Endothelial cell of umbilical vein (primary cell): ENCODE measurements at regions of chr7 and their contacts with region 1.

Region 1: DNA sequence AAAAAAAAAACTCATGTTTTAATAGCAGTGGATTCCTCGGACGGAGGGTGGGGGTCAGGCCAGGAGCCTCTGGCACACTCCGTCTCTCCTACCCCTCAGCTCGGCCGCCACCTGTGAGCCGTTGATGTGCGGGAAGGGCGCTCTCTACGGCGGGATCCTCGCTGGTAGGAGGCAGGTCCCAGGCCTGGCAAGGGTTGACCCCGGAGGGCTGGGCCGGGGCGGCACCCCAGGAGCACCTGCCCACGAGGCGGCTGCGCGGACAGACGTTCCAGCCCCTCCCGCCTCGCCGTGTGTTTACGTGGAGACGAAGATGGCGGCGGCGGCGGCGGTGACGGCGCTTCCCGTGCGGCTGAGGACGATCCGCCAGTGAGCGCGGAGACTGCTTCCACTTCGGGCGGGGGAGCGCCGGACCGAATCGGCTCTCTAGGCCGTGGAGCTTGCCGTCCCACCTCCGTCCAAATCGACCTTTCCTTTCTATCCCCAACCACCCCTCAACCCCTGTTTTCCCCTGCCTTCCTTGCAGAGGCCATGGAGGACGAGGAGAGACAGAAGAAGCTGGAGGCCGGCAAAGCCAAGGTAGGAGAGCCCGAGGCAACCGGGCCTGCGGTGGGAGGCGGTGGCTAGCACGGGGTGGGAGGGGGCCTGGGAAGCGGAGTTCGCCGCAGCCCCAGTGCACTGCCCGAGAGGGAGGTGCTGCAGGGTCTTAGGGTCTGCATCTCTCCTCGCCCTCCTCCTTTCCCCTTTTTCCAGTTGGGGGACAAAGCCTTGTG is at the start of gene AKAP9:
- DNase-seq: peak; percentile 89
- H3K4me3 ChIP-seq: peak within 1 kb of the TSS; percentile 84 to 95 (median 94)
- H3K27ac ChIP-seq: peak within 1 kb of the TSS; percentile 62
- H3K4me1 ChIP-seq: peaks cover 16% of the 10 kb centered on the region
- H3K27me3 ChIP-seq: no peaks in the 10 kb centered on the region
- CTCF ChIP-seq: no peak
- POLR2A ChIP-seq: peak; percentile 59
- total RNA-seq, gene AKAP9: 41.8 and 51.6 TPM in 2 replicates

Region 2: DNA sequence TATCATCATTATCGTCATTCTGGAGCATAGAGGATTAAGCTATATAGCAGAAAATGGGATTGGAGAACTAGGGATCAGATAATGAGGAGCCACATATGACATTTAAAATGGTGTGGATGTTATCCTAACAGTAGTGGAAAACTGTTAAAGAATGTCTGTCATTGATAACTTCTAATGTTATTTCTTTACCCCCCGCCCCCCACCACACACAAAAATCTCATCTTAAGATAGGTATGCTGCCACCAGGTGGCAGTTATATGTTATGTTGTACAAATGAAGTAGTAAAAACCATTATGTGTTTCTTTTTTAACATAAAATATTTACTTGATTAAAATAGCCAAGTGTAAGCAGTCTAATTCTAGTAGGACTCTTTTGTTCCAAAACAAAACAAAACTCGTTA is 12.9 kb after region 1 on chr7:
- CTCF ChIA-PET with region 1: interaction called, 30 read pairs
- POLR2A ChIA-PET with region 1: no interaction called
- dilution Hi-C with region 1: no loop called
- intact Hi-C with region 1: no loop called
- DNase-seq: peak; percentile 22
- H3K4me3 ChIP-seq: no peak overlapping the region
- H3K27ac ChIP-seq: no peak overlapping the region
- H3K4me1 ChIP-seq: no peaks in the 10 kb centered on the region
- H3K27me3 ChIP-seq: no peaks in the 10 kb centered on the region
- CTCF ChIP-seq: no peak
- POLR2A ChIP-seq: no peak

Region 3: GRCh38 chr7:91961816-91962215 is 21.1 kb after region 1 on chr7:
- CTCF ChIA-PET with region 1: interaction called, 5 read pairs
- POLR2A ChIA-PET with region 1: no interaction called
- dilution Hi-C with region 1: no loop called
- intact Hi-C with region 1: loop called (anchors 1 kb)
- DNase-seq: no peak
- H3K4me3 ChIP-seq: no peak overlapping the region
- H3K27ac ChIP-seq: peak overlapping the region; percentile 38
- H3K4me1 ChIP-seq: peaks cover 14% of the 10 kb centered on the region
- H3K27me3 ChIP-seq: no peaks in the 10 kb centered on the region
- CTCF ChIP-seq: no peak
- POLR2A ChIP-seq: no peak